AG04449 (cell line): ENCODE measurements at regions of chr17 and their contacts with region 1.

Region 1: GRCh38 chr17:49290690-49291359 is 60.2 kb upstream of the PHOSPHO1 start:
- DNase-seq: peak; percentile 4
- H3K4me3 ChIP-seq: no peak overlapping the region
- CTCF ChIP-seq: peak; percentile 53

Region 2: DNA sequence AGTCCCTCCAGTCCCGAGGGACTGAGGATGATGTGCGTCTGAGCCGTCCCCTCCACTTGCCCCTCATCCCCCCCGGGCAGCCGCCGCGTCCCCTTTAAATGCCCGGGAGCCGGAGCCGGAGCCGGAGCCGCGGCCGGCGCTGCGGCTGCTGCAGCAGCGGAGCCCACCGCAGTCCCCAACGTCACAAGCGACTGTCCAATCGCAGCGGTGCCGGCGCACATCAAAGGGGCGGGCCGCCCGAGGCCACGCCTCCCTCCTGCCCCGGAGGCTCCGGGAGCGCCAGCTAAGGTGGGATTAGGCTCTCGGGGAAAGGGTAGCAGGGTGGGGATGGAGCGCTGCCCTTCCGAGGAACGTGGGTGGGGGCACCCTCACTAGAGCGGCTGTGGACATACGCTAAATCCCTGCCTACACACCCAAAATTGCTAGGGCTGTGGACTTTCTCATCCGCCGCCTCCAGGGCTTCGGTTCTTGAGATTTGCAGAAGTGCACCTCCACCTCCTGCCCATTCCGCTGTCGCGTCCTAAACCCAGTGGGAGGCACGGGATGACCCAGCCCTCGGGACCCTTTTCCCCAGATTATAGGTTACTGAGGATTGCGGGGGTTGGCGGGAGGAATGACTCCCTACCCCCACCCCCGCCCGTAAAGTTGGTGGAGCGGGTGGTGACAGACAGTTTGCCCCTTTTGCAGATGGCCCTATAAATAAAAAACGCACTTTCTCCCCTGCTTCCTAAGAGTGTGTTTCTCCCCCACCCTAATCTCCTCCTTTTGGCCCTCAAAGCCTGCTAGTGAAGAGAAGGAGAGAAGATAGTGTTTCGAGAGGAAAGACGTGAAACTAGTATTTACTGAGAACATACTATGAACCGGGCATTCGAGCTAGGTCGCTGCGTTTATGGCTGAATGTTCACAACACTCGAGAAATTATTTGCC is 59.9 kb before region 1 on chr17 and contains the start of gene PHOSPHO1:
- CTCF ChIA-PET with region 1: interaction called, 19 read pairs
- POLR2A ChIA-PET with region 1: no interaction called
- DNase-seq: no peak
- H3K4me3 ChIP-seq: peak within 1 kb of the TSS; percentile 85
- CTCF ChIP-seq: no peak

Region 3: DNA sequence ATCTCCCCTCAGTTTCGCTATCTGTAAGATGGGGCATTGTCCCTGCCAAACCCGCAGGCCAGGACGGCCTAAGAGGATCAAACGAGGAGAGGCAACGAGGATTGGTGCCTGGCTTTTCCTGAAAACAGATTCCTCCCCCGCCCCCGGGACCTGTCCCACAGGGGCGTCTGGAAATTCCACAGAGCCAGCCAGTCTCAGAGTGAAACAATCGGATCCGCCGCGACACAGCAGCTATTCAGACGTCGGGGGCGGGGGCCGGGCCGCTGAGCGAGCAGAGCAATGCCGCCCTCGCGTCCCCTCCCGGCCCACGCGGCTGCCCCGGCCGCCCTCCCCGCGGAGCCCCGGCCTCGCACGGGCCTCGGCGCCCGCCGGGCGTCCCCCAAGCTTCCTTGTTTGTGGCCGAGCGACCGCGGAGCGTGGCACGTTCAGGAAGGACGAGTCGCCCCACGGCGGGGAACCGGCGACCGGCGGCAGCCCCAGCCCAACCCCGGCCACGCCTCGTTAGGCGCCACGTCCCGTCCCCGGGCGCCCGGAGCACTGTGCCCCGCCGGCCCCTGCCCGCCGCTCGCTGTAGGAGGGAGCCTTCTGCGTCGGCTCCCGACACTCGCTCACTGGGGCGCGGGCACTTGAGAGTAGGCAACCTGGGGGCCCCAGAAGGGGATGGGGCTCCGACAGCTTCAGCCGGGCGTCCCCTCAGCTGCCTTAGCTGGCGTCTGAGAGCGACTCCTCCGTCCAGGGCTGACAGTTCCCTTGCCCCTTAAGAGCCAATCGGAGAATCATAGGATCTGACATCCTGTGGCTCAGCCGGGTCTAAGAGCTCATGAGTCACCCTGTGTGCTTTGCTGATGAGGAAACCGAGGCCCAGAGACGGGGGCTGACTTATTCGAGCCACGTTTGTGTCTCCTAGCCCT is 30.6 kb before region 1 on chr17:
- CTCF ChIA-PET with region 1: interaction called, 13 read pairs
- POLR2A ChIA-PET with region 1: no interaction called
- DNase-seq: peak; percentile 21
- H3K4me3 ChIP-seq: peak overlapping the region; percentile 52
- CTCF ChIP-seq: no peak

Region 4: DNA sequence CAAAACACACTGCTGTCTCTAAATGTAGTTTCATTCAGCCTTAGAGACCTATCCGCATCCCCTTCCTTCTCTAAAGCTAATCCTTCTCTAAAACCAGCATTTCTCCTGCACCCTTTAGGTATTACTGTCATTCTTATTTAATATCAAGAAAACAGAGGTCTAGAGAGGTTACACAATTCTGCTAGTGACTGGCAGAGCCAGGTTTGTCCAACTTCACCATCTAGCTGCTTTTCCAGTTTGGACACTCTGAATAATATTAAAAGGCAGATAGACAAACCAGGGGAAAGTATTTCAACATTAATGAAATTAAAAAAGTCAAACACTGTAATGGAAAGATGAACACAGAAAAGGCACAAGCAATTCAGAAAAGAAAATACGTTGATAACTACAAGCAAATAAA is 15.1 kb after region 1 on chr17:
- CTCF ChIA-PET with region 1: interaction called, 11 read pairs
- POLR2A ChIA-PET with region 1: no interaction called
- DNase-seq: no peak
- H3K4me3 ChIP-seq: no peak overlapping the region
- CTCF ChIP-seq: no peak